ENCODE measurements at regions of chr3 and their contacts with region 1.

Region 1: DNA sequence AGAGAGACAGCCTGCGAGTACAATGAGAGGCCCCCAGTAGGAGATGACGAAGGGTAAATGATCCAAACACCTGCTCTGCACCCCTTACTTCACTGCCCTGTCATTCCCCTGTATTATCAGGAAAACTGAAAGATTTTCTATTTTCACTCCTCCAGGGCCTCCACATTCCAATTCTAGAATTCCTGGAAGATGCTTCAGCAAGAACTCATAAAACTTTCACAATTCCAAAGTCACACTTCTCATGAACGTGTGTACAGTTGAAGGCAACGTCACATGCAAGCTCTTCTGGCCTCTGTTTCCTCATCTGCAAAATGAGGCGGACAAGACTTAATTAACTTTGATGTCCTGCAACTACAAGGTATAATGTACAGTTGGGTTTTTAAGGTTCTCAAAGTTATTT is 62.8 kb upstream of the SPATA12 start:
- DNase-seq: peak; percentile 47
- ATAC-seq: peak; percentile 73
- H3K4me3 ChIP-seq: no peak overlapping the region
- H3K27ac ChIP-seq: no peak overlapping the region
- H3K4me1 ChIP-seq: peaks cover 13% of the 10 kb centered on the region; the same call in 1 of the 2 replicates
- H3K27me3 ChIP-seq: no peaks in the 10 kb centered on the region
- CTCF ChIP-seq: no peak
- POLR2A ChIP-seq: no peak
- RAD21 ChIP-seq: no peak

Region 2: DNA sequence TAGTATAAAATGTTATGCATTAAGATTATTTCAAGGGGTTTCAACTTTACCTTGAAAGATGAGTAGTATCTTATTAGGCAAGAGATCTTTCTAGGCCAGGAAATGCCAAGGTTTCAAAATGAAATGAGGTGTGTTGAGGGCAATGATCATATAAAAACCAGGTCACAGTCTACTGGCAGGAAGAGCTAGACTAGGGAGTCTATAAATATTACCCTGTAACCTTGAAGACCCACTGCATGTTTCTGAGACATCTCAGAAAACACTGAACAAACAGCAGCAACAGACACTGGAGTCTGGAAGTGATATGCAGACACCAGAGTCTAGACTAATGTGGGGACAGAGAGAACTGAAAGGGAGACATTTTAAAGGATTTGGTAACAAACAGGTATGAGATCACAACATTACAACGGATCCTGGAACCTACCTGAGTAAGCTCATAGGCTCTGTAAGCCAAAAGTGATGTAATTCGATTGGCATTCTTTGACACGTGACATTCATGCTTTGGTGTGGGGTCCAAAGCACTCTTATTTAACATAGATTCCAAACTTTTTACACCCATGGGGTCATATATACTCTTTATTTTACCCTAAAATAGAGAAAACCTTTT is 329.6 kb before region 1 on chr3:
- CTCF ChIA-PET with region 1: no interaction called
- POLR2A ChIA-PET with region 1: no interaction called
- dilution Hi-C with region 1: no loop called
- in situ Hi-C with region 1: no loop called
- intact Hi-C with region 1: no loop called
- DNase-seq: no peak
- ATAC-seq: no peak
- H3K4me3 ChIP-seq: no peak overlapping the region
- H3K27ac ChIP-seq: no peak overlapping the region
- H3K4me1 ChIP-seq: no peaks in the 10 kb centered on the region
- H3K27me3 ChIP-seq: no peaks in the 10 kb centered on the region
- CTCF ChIP-seq: no peak
- POLR2A ChIP-seq: no peak
- RAD21 ChIP-seq: no peak

Region 3: DNA sequence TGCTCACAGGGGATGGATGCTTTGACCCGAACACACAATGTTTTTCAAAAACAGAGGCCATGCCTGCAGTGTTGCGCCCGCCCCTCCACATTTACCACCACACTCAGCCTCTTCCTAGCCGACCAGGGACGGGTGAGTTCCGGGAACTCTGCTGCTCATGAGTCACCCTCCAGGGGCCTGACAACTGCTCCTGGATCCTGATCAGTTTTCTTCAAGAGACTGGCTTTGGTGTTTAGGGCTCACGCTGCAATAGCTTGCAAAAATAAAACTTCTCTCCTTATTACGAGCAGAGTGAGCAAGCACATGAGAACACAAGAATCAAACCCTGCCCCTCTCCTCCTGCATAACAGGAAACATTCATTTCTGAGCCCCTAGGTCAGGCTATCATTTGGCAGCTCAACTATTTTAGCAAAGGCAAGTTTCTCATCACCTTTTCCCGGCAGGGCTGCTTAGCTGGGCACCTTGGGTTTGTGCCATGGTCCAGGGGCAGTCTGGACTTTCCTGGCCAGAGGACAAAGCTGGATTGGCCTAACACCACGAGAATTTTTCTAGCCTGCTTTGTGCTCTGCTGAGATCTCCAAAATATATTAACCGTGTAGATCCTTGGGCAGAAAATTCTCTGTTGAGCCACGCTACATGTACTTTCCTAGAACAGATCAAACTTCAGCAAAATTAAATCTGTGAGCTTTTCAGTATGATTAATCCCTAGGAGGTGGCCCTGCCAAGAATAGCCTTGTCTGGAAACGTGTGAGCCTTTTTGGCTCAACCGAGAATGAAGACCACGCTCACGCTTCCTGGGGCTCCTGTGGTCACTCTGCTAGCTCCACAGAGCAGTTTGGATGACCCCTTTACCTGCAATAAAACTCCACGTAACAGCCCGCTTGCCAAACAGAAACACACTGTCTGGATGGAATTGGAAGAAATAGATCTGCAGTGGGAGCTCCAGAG is 10.1 kb after region 1 on chr3:
- CTCF ChIA-PET with region 1: interaction called, 12 read pairs
- POLR2A ChIA-PET with region 1: no interaction called
- dilution Hi-C with region 1: no loop called
- in situ Hi-C with region 1: no loop called
- intact Hi-C with region 1: no loop called
- DNase-seq: peak; percentile 85
- ATAC-seq: peak; percentile 95
- H3K4me3 ChIP-seq: no peak overlapping the region
- H3K27ac ChIP-seq: peak overlapping the region; percentile 87; the same call in 1 of the 2 replicates
- H3K4me1 ChIP-seq: peaks cover 24% of the 10 kb centered on the region
- H3K27me3 ChIP-seq: 0 out of 2 replicates have a peak, but pooled peaks cover 2% of the 10 kb centered on the region
- CTCF ChIP-seq: no peak
- POLR2A ChIP-seq: no peak
- RAD21 ChIP-seq: no peak

Region 4: DNA sequence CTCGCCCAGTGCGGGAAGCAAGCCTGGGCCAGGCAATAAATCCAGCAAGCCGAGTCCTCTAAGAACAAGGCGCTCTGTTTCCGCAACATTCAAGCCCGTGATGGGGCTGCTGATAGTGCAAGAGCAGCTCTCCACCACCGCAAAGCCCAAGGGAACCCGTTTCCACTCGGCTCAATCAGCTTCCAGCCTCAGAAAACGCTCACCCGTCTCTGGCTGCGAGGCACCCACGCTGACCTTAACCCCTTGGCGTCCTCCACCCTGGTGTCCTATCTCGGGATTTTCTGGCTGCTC is 80.6 kb after region 1 on chr3:
- CTCF ChIA-PET with region 1: interaction called, 3 read pairs
- POLR2A ChIA-PET with region 1: no interaction called
- dilution Hi-C with region 1: no loop called
- in situ Hi-C with region 1: no loop called
- intact Hi-C with region 1: loop called (anchors 2 kb)
- DNase-seq: peak; percentile 16
- ATAC-seq: no peak; the same call in 1 of the 2 replicates
- H3K4me3 ChIP-seq: peak overlapping the region; percentile 72
- H3K27ac ChIP-seq: no peak overlapping the region
- H3K4me1 ChIP-seq: no peaks in the 10 kb centered on the region; the same call in 1 of the 2 replicates
- H3K27me3 ChIP-seq: peaks cover 27% of the 10 kb centered on the region
- CTCF ChIP-seq: no peak
- POLR2A ChIP-seq: no peak
- RAD21 ChIP-seq: no peak

Region 5: GRCh38 chr3:57094575-57094974 is 96.9 kb after region 1 on chr3:
- CTCF ChIA-PET with region 1: interaction called, 6 read pairs
- POLR2A ChIA-PET with region 1: no interaction called
- dilution Hi-C with region 1: no loop called
- in situ Hi-C with region 1: no loop called
- intact Hi-C with region 1: loop called (anchors 5 kb)
- DNase-seq: peak; percentile 73
- ATAC-seq: peak; percentile 72
- H3K4me3 ChIP-seq: no peak overlapping the region
- H3K27ac ChIP-seq: no peak overlapping the region; the same call in 1 of the 2 replicates
- H3K4me1 ChIP-seq: peaks cover 12% of the 10 kb centered on the region; the same call in 1 of the 2 replicates
- H3K27me3 ChIP-seq: no peaks in the 10 kb centered on the region
- CTCF ChIP-seq: no peak
- POLR2A ChIP-seq: no peak
- RAD21 ChIP-seq: no peak

Region 6: DNA sequence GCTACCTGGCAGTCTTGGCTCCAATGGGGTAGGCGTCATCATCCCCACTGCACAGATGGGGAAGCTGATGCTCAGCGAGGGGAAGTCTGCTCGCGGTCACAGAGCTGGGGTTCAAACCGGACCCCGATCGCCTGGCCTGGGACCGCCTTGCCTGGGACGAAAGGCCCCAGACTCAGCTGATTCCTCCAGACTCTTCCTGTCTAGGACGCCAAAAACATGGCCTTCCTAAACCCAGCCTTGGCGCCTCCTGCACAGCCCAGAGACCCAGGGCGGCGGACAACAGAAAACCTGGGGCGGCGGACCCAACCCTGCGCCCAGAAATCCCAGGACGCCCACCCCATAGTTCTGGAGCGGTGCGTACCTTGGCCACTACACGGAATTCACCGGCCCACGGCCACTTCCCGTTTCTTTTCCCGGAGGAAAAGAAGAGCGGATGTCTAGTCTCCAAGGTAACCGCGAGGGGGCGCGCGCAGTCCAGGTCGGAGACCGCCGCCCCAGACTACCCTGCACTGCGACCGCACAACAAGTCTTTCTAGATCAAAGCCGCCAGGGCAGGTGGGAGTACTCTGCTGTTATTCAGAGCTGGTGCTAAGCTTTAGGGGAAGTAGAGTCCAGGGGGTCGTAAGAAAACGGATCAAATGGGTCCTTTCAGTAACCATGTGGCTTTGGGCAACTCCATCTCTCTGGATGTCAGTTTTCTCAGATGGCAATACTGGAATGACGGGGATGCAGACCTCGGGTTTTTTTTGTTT is 172.4 kb after region 1 on chr3:
- CTCF ChIA-PET with region 1: interaction called, 3 read pairs
- POLR2A ChIA-PET with region 1: no interaction called
- dilution Hi-C with region 1: no loop called
- in situ Hi-C with region 1: no loop called
- intact Hi-C with region 1: loop called (anchors 5 kb)
- DNase-seq: peak; percentile 52
- ATAC-seq: peak; percentile 85
- H3K4me3 ChIP-seq: peak overlapping the region; percentile 43
- H3K27ac ChIP-seq: no peak overlapping the region
- H3K4me1 ChIP-seq: peaks cover 3% of the 10 kb centered on the region; the same call in 1 of the 2 replicates
- H3K27me3 ChIP-seq: peaks cover 20% of the 10 kb centered on the region
- CTCF ChIP-seq: peak; percentile 77
- POLR2A ChIP-seq: no peak
- RAD21 ChIP-seq: peak; percentile 76

Region 7: GRCh38 chr3:57227204-57227929 is 229.7 kb after region 1 on chr3 and contains the start of gene APPL1:
- CTCF ChIA-PET with region 1: no interaction called
- POLR2A ChIA-PET with region 1: interaction called, 8 read pairs
- dilution Hi-C with region 1: no loop called
- in situ Hi-C with region 1: no loop called
- intact Hi-C with region 1: loop called (anchors 5 kb)
- DNase-seq: peak; percentile 85
- ATAC-seq: peak; percentile 99
- H3K4me3 ChIP-seq: peak within 1 kb of the TSS; percentile 86
- H3K27ac ChIP-seq: peak within 1 kb of the TSS; percentile 72
- H3K4me1 ChIP-seq: peaks cover 2% of the 10 kb centered on the region; the same call in 1 of the 2 replicates
- H3K27me3 ChIP-seq: no peaks in the 10 kb centered on the region
- CTCF ChIP-seq: no peak
- POLR2A ChIP-seq: peak; percentile 49; the same call in 1 of the 2 replicates
- RAD21 ChIP-seq: no peak
- total RNA-seq, gene APPL1: 42.2 and 46.2 TPM in 2 replicates

Measured in IMR-90 (cell line).